GM10248 (cell line): ENCODE measurements at regions of chr19 and their contacts with region 1.

Region 1: DNA sequence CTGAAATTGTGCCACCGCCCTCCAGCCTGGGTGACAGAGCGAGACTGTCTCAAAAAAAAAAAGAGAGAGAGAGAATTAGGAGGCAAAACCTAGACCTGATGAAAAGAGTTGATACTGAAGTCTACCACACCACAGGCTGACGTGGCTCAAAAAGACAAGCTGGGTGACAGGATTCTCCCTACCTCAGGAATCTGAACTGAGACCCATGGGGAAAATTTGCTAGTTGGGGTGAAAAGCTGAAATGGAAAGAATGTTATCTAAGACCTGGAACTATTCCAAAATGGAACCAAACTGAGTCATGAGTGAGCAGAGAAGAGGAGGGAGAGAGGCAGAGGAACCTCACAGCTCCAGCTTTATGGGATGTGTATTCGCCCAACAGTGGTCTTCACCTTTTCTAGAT is 11.7 kb downstream of the SMG9 start:
- DNase-seq: no peak
- CTCF ChIP-seq: no peak

Region 2: DNA sequence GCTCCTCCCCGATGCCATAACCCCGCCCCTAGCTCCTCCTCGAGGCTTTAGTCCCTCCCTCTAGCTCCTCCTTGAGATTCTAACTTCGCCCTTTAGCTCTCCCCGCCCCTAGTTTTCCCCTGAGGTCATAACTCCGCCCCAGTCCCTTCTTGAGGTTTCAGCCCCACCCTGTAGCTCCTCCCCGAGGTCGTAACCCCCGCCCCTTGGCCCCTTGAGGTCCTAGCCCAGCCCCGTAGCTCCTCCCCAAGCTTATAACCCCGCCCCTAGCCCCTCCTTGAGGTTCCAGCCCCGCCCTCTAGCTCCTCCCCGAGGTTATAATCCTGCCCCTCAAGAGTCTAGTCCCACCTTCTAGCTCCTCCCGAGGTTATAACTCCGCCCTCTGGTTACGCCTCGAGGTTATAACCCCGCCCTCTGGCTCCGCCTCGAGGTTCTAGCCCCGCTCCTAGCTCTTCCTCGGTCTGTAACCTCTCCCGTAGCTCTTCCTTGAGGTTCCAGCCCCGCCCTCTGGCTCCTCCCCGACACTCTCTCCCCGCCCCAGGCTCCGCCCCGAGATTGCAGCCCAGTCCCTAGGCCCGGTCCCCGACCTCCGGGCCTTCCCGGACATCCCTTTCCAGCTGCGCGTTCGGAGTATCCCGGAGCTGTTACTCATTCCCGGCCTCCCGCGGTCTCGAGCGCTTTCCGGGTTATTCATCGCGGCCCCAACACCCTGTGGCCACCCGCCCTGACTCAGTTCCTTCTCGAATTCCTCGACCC is 74.4 kb before region 1 on chr19:
- CTCF ChIA-PET with region 1: interaction called, 12 read pairs
- POLR2A ChIA-PET with region 1: no interaction called
- DNase-seq: peak; percentile 98
- CTCF ChIP-seq: no peak

Region 3: GRCh38 chr19:43754503-43755255 is 11.7 kb after region 1 on chr19 and contains the start of gene SMG9:
- CTCF ChIA-PET with region 1: interaction called, 12 read pairs
- POLR2A ChIA-PET with region 1: no interaction called
- DNase-seq: peak; percentile 93
- CTCF ChIP-seq: no peak

Region 4: GRCh38 chr19:43765109-43765876 is 22.3 kb after region 1 on chr19:
- CTCF ChIA-PET with region 1: interaction called, 61 read pairs
- POLR2A ChIA-PET with region 1: no interaction called
- DNase-seq: peak; percentile 72
- CTCF ChIP-seq: no peak

Region 5: GRCh38 chr19:43784981-43785808 is 42.2 kb after region 1 on chr19:
- CTCF ChIA-PET with region 1: interaction called, 53 read pairs
- POLR2A ChIA-PET with region 1: no interaction called
- DNase-seq: peak; percentile 71
- CTCF ChIP-seq: peak; percentile 92

Region 6: DNA sequence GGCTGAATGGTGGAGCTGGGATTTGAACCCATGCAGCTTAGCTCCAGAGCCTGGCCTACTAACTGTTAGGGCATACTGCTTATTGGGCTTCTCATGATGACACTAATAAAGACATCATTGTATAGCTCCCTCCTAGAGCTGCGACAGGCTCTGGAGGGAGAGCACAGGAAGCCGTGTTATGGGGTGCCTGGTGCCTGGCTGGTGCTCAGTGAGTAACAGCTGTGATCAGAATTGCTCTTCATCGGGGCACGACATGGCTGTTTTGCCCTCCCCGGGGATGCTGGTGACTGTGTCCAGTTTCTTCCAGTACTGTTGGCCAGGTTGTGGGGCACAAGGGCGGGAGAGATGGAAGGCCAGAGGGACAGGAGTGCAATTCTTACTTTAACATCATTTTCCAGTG is 54.1 kb after region 1 on chr19:
- CTCF ChIA-PET with region 1: interaction called, 24 read pairs
- POLR2A ChIA-PET with region 1: no interaction called
- DNase-seq: no peak
- CTCF ChIP-seq: no peak

Region 7: DNA sequence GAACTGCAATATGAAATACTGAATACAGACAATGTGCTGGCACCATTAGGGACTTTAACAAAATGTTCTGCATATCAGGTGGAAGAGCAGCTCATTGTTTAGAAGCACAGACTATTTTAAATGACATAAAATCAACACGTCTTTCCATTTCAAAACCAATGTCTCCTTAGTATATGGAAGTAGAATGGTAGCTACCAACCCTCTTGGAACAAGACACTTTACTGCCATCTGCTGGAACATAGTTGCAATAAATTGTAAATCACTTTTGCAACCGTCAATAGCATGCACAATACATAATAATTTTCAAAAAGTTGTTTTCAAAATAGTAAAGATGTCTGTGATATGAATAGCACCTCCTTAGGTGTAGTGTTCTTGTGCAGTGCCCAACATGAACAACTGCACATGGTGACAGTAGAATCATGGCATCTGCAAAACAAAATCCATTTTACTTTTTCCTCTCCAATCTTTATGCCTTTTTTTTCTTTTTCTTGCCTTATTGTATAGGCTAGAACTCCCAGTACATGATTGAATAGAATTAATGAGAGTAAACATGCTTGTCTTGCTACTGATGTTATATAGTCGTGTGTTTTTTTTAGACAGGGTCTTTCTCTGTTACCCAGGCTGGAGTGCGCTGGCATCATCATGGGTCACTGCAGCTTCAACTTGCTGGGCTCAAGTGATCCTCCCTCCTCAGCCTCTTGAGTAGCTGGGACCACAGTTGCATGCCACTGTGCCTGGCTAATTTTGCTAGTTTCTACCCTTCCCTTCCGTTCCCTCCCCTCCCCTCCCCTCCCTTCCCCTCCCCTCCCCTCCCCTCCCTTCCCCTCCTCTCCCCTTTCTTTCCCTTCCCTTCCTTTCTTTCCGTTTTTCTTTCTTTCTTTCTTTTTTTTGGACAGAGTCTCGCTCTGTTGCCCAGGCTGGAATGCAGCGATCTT is 67.0 kb after region 1 on chr19:
- CTCF ChIA-PET with region 1: interaction called, 67 read pairs
- POLR2A ChIA-PET with region 1: no interaction called
- DNase-seq: peak; percentile 56
- CTCF ChIP-seq: peak; percentile 59